HepG2 (cell line): ENCODE measurements at regions of chr11 and their contacts with region 1.

Region 1: GRCh38 chr11:118251858-118252652 is at the start of gene MPZL3:
- DNase-seq: peak; percentile 91
- ATAC-seq: peak; percentile 94
- H3K4me3 ChIP-seq: peak within 1 kb of the TSS; percentile 88 to 98 (median 89)
- H3K27ac ChIP-seq: peak within 1 kb of the TSS; percentile 98
- H3K4me1 ChIP-seq: peaks cover 27% of the 10 kb centered on the region
- H3K27me3 ChIP-seq: no peaks in the 10 kb centered on the region; a peak in 1 of 5 replicates
- CTCF ChIP-seq: no peak
- EP300 ChIP-seq: no peak
- POLR2A ChIP-seq: peak in 1 of 2 experiments; percentile 73; a peak in 2 of 4 replicates
- RAD21 ChIP-seq: 0 out of 2 replicates have a peak, but pooled peaks have one; percentile 40
- total RNA-seq, gene MPZL3: 6.6 and 9.3 TPM in 2 replicates

Region 2: GRCh38 chr11:118214210-118214914 is 37.7 kb before region 1 on chr11:
- CTCF ChIA-PET with region 1: no interaction called
- POLR2A ChIA-PET with region 1: interaction called, 23 read pairs
- in situ Hi-C with region 1: no loop called
- intact Hi-C with region 1: loop called (anchors 1 kb)
- DNase-seq: no peak
- ATAC-seq: no peak
- H3K4me3 ChIP-seq: no peak overlapping the region
- H3K27ac ChIP-seq: peak overlapping the region; percentile 95
- H3K4me1 ChIP-seq: peaks cover 72% of the 10 kb centered on the region
- H3K27me3 ChIP-seq: no peaks in the 10 kb centered on the region
- CTCF ChIP-seq: no peak
- EP300 ChIP-seq: no peak
- POLR2A ChIP-seq: no peak
- RAD21 ChIP-seq: no peak

Region 3: DNA sequence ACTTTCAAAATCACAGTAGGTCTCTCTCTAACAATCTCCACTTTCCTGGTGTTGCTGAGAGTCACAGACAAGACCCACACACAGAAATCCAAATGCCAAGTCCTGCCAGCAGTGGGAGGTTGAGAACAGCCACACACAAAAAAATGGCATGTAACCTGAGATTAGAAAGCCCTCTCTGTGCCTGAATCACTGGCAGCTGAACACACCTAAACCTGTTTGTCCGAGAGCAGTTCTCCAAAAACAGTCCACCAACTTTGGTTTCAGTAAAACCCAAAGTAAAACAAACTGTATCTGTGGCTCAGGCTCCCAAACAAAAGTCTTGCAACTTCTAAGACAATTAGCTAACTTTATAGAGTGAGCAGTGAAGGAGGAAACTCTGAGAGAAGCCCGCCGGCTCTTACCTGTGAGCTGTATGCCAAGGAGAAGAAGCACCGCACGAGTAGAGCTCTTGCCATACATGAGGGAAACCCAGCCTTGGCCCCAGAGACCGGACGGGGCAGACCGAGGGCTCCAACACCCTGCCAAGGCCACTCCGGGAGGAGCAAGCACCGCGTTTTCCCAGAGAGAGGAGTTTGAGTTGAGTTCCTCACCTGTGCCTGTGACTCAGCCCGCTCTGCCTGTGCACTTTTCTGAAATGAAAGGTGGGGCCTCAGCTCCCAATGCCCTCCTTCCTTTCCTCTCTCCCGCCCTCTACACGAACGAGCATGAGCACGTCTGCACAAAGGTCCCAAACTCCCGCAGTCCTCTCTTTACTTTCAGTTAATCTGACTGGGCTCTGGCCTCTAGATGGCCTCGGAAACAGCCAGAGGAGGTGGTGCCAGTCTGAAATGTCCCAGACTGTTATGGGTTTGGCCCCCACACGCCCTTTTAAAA is 11.9 kb after region 1 on chr11 and contains the start of gene MPZL2:
- CTCF ChIA-PET with region 1: no interaction called
- POLR2A ChIA-PET with region 1: interaction called, 11 read pairs
- in situ Hi-C with region 1: no loop called
- intact Hi-C with region 1: no loop called
- DNase-seq: peak; percentile 81
- ATAC-seq: peak; percentile 97
- H3K4me3 ChIP-seq: peak within 1 kb of the TSS; percentile 58 to 77 (median 66)
- H3K27ac ChIP-seq: peak within 1 kb of the TSS; percentile 43
- H3K4me1 ChIP-seq: peaks cover 43% of the 10 kb centered on the region
- H3K27me3 ChIP-seq: peaks cover 0 to 22% of the 10 kb centered on the region in 2 experiments; a peak in 4 of 5 replicates
- CTCF ChIP-seq: peak; percentile 59
- EP300 ChIP-seq: peak in 1 of 2 experiments; percentile 18; a peak in 1 of 4 replicates
- POLR2A ChIP-seq: peak; percentile 39 to 73; a peak in 3 of 4 replicates
- RAD21 ChIP-seq: no peak
- total RNA-seq, gene MPZL2: 16.6 and 27.9 TPM in 2 replicates